Calu3 (cell line): ENCODE measurements at regions of chr6 and their contacts with region 1.

Region 1: DNA sequence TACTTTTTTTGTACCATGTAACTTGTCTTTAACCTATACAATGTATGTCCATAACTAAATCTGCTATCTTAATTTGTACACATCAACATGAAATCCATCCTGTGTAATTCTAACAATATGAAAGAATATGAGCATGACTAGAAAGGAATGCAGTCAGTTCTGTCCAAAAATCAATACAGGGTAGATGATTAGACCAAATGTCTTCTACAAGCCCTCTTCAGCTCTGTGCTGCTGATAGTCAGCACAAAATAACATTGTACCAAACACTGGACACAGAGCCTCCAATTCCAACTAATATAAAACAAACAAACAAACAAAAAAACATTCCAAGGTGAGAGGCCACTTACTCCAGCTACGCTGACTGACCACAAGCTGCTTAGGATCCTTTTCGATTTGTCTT is 301.4 kb upstream of the IRAK1BP1 start:
- DNase-seq: peak; percentile 22
- H3K4me3 Mint-ChIP-seq: peak overlapping the region; percentile 17
- H3K27ac Mint-ChIP-seq: peak overlapping the region; percentile 81
- H3K4me1 Mint-ChIP-seq: peaks cover 45% of the 10 kb centered on the region
- H3K27me3 Mint-ChIP-seq: no peaks in the 10 kb centered on the region
- CTCF ChIP-seq: no peak

Region 2: DNA sequence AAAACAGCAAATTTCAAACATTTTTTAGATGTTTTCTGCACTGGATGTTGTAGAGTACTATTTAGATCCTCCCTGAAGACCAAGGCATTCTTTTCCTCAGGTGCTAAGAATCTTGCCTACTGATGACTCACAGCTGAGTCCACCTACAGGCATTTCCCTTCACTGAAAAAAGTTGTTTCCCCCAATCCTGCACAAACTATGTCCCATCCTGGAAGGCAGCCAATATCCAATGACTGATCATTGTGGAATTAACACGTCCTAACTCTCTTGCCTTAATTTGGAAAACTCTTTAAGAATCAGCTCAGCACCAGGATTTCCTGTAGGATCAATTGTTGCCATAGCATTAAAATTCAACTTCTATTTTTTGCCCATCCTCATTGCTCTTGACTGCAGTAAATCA is 33.0 kb after region 1 on chr6:
- CTCF ChIA-PET with region 1: interaction called, 9 read pairs
- intact Hi-C with region 1: loop called (anchors 1 kb)
- DNase-seq: peak; percentile 86
- H3K4me3 Mint-ChIP-seq: no peak overlapping the region
- H3K27ac Mint-ChIP-seq: peak overlapping the region; percentile 96
- H3K4me1 Mint-ChIP-seq: peaks cover 75% of the 10 kb centered on the region
- H3K27me3 Mint-ChIP-seq: no peaks in the 10 kb centered on the region
- CTCF ChIP-seq: no peak

Region 3: GRCh38 chr6:78629154-78629721 is 63.2 kb after region 1 on chr6:
- CTCF ChIA-PET with region 1: no interaction called
- intact Hi-C with region 1: no loop called
- DNase-seq: no peak
- H3K4me3 Mint-ChIP-seq: peak overlapping the region; percentile 58
- H3K27ac Mint-ChIP-seq: no peak overlapping the region
- H3K4me1 Mint-ChIP-seq: no peaks in the 10 kb centered on the region
- H3K27me3 Mint-ChIP-seq: no peaks in the 10 kb centered on the region
- CTCF ChIP-seq: no peak